Activated CD4-positive, alpha-beta T cell treated with anti-CD3 and anti-CD28 coated beads, Interleukin-2, amount 10 ng/mL, durations not matched to agents 24 days and 14 days (primary cell): ENCODE measurements at regions of chr6 and their contacts with region 1.

Region 1: GRCh38 chr6:13355043-13355951 is 27.0 kb upstream of the TBC1D7 start:
- DNase-seq: peak; percentile 84
- H3K4me3 Mint-ChIP-seq: peak overlapping the region; percentile 74
- H3K27ac Mint-ChIP-seq: peak overlapping the region; percentile 97
- H3K4me1 Mint-ChIP-seq: peaks cover 57% of the 10 kb centered on the region
- H3K27me3 Mint-ChIP-seq: no peaks in the 10 kb centered on the region

Region 2: DNA sequence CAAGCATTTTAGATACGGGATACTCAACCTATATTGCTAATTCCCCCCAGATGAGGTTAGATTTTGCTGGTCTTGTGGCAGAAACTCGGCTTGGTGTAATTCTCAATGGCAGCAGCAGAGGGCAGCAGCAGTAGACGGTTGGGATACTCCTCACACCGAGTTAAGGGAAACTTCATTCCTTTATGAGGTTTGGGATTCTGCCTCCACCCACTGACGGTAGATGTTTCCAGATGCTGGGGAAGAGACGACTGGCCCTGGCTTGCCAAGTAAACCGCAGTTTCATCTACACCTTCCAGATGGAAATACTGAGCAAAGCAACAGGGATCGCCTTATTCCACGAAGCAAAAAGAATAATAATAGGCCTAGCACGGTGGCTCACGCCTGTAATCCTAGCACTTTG is 18.7 kb before region 1 on chr6:
- intact Hi-C with region 1: loop called (anchors 2 kb)
- DNase-seq: peak; percentile 93
- H3K4me3 Mint-ChIP-seq: no peak overlapping the region
- H3K27ac Mint-ChIP-seq: no peak overlapping the region
- H3K4me1 Mint-ChIP-seq: peaks cover 34% of the 10 kb centered on the region
- H3K27me3 Mint-ChIP-seq: no peaks in the 10 kb centered on the region

Region 3: GRCh38 chr6:13427801-13428582 is 72.7 kb after region 1 on chr6:
- intact Hi-C with region 1: loop called (anchors 1 kb)
- DNase-seq: peak; percentile 89
- H3K4me3 Mint-ChIP-seq: peak overlapping the region; percentile 71
- H3K27ac Mint-ChIP-seq: peak overlapping the region; percentile 96
- H3K4me1 Mint-ChIP-seq: peaks cover 65% of the 10 kb centered on the region
- H3K27me3 Mint-ChIP-seq: no peaks in the 10 kb centered on the region

Region 4: GRCh38 chr6:13466304-13467215 is 111.3 kb after region 1 on chr6:
- intact Hi-C with region 1: loop called (anchors 1 kb)
- DNase-seq: no peak
- H3K4me3 Mint-ChIP-seq: peak overlapping the region; percentile 60
- H3K27ac Mint-ChIP-seq: peak overlapping the region; percentile 88
- H3K4me1 Mint-ChIP-seq: peaks cover 52% of the 10 kb centered on the region
- H3K27me3 Mint-ChIP-seq: no peaks in the 10 kb centered on the region

Region 5: DNA sequence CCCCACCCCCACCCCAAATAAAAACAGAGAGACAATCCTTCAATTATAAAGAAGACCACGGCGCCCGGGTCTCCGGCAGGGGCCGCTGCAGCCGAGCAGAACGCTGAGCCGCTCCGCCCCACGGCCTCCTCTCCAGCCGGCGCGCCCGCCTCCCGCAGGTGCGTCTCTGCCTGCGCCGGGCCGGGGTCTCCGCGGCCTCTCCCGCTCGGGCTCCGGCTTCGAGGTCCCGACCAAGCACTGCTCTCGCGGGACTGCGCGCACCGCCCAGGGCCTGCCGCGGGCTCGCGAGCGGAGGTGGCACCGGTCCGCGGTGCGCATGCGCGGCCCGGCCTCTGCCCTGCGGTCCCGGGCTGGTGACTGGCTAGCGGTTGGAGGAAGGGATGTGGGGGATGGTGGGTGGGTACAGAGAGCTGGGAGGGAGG is 218.9 kb after region 1 on chr6:
- intact Hi-C with region 1: loop called (anchors 1 kb)
- DNase-seq: peak; percentile 97
- H3K4me3 Mint-ChIP-seq: peak overlapping the region; percentile 97
- H3K27ac Mint-ChIP-seq: peak overlapping the region; percentile 100
- H3K4me1 Mint-ChIP-seq: peaks cover 18% of the 10 kb centered on the region
- H3K27me3 Mint-ChIP-seq: no peaks in the 10 kb centered on the region

Region 6: GRCh38 chr6:13814176-13814937 is 459.1 kb after region 1 on chr6 and contains the start of gene MCUR1:
- intact Hi-C with region 1: loop called (anchors 10 kb)
- DNase-seq: peak; percentile 95
- H3K4me3 Mint-ChIP-seq: peak within 1 kb of the TSS; percentile 88
- H3K27ac Mint-ChIP-seq: peak within 1 kb of the TSS; percentile 84
- H3K4me1 Mint-ChIP-seq: peaks cover 28% of the 10 kb centered on the region
- H3K27me3 Mint-ChIP-seq: peaks cover 16% of the 10 kb centered on the region
- total RNA-seq, gene MCUR1: 39.0 and 43.7 TPM in 2 replicates